ENCODE measurements at regions of chr1 and their contacts with region 1.

Region 1: DNA sequence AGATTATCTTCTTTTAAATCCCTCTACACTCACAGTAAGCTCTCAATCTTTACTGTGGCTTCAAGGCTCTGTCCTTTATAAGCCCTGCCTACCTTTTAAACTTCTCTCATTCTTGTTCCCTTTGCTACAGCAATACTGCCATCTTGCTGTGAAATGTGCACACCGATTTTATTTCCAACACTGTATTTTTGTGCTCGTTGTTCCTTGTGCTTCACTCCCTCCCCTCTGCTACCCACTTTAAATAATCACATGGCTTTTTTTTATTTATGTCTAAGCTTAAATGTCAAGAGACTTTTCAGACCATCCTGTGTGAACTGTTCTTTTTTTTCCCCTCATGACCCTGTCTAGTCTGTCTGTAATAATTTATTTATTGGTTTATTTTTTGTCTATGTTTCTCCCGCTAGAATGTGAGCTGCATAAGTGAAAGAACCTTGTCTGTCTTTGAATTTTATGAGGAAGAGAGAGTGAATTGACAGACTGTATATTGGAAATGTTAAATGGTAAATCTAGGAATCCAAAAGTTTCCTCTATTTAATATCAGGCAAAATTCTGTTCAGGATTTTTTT is 45.7 kb downstream of the ABCD3 start:
- DNase-seq: peak; percentile 25
- CTCF ChIP-seq: peak; percentile 61

Region 2: DNA sequence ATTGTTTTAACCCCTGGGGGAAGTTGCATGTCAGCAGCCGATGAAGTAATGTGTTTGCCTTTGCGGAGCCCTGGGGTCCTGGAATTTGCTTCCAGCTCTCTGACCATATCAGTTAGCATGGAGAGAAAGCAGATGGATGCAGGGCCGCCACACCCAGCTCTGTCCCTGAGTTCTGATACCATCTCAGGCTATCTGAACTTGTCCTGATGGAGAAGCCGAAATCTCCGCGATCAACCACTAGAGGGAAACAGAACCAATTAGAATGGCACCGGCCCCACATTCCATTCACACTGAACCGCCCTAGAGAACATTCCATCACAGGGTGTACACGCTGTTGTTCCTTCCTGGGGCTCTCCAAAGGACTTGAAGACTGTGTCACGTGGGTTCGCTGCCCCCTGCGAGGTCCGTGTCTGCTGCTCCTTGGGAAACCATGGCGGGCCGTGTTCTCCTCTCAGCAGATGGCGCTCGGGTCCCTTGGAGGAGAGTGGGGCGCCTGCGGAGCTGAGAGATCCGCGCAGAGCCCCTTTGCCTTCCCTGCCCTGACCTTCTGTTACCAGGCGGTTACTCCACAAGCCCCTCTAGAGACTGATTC is 418.3 kb before region 1 on chr1:
- in situ Hi-C with region 1: loop called (anchors 25 kb)
- DNase-seq: peak; percentile 44
- CTCF ChIP-seq: peak; percentile 45

Region 3: DNA sequence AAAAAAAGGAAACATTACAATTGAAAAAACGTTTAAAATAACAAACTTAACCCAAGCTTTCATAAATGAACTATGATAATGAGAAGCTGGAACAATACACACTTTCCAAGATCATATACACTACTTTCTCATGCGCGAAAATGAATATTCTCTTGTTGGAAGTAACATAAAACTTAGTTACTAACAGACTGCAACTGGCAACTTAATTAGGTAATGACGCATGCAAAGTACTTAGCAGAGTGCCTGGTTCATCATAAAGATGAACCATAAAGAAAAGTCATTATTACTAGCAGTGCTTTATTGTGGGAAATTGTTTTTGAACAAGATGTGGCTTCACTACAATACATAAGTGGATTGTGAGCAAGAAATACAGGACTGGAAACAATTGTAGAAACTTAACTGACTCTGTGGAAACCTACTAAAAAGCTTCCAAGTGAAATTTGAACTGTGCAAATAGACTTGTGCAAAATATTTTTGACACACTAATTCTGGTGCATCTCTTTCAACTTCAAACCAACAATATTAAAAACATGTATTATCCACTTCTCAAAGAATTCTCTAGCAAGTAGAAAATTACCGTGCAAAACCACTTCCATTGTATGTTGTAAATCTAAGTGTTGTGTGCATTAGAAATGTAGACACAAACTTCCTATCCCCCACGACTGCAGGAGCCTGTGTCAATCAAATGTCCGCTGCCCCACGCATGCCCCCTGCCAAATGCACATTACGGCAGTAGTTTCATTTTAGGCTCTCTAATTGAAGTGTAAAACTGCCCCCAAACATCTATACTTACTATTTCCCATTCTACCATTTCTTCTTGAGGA is 228.4 kb before region 1 on chr1:
- in situ Hi-C with region 1: no loop called
- DNase-seq: no peak
- CTCF ChIP-seq: no peak